Naive thymus-derived CD4-positive, alpha-beta T cell (primary cell): ENCODE measurements at regions of chr19 and their contacts with region 1.

Region 1: DNA sequence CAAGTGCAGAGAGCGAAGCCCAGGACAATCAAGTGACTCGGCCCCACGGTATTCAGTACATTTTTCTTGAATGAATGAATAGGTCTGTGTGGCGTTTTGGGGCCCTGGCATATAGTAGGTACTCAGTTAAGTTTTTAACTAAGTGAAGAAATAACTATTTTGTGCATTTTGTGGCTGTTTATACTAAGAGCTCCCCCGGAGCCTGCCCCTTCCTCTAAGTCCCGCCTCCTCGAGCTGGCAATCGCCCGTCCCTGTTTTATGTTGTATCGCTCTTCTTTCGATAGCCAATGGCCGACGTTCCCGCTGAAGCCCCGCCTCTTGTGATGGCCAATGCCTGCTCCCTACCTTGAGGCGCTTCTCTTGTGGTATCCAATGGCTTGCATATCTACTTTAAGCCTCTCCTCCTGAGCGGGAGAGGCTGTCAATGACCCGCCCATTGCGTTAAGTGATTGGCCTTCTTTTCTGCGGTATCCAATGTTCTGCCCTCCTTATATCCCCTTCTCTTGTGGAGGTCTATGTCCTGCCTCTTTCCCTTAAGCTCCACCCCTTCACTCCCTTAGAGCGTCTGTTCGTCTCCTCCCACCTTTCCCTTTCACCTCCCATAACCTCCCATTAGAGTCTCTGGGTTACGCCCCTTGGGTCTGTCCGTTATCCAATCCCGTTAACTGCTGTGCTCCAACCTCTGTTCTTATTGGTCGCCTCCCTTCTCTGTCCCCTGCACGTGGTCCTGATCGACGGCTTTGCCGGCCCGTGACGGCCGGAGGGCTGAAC is 509 bp upstream of the HDGFL2 start:
- DNase-seq: peak; percentile 78 to 100 (median 98)
- ATAC-seq: peak; percentile 90
- H3K4me3 ChIP-seq: peak overlapping the region; percentile 71
- H3K4me3 Mint-ChIP-seq: no peak overlapping the region
- H3K27ac ChIP-seq: peak overlapping the region; percentile 77
- H3K27ac Mint-ChIP-seq: no peak overlapping the region
- H3K4me1 ChIP-seq: peaks cover 7 to 12% of the 10 kb centered on the region in 2 donors
- H3K4me1 Mint-ChIP-seq: peaks cover 11 to 25% (median 24%) of the 10 kb centered on the region in 7 donors
- H3K27me3 ChIP-seq: no peaks in the 10 kb centered on the region
- H3K27me3 Mint-ChIP-seq: no peaks in the 10 kb centered on the region

Region 2: GRCh38 chr19:4065430-4066175 is 406.0 kb before region 1 on chr19:
- CTCF ChIA-PET with region 1: no interaction called
- POLR2A ChIA-PET with region 1: no interaction called
- intact Hi-C with region 1: loop called in 1 of 2 experiments (anchors 1 kb)
- DNase-seq: peak; percentile 97 to 99 (median 98)
- ATAC-seq: peak; percentile 89
- H3K4me3 ChIP-seq: no peak overlapping the region
- H3K4me3 Mint-ChIP-seq: peak overlapping the region; percentile 29 to 90 (median 67)
- H3K27ac ChIP-seq: peak overlapping the region; percentile 95
- H3K27ac Mint-ChIP-seq: peak overlapping the region in 6 of 9 donors; percentile 12 to 86 (median 66)
- H3K4me1 ChIP-seq: peaks cover 41 to 56% of the 10 kb centered on the region in 2 donors
- H3K4me1 Mint-ChIP-seq: peaks cover under 1 to 42% (median 26%) of the 10 kb centered on the region in 7 donors
- H3K27me3 ChIP-seq: no peaks in the 10 kb centered on the region
- H3K27me3 Mint-ChIP-seq: no peaks in the 10 kb centered on the region

Region 3: GRCh38 chr19:4328243-4328990 is 143.2 kb before region 1 on chr19:
- CTCF ChIA-PET with region 1: no interaction called
- POLR2A ChIA-PET with region 1: no interaction called
- intact Hi-C with region 1: loop called in 1 of 2 experiments (anchors 5 kb)
- DNase-seq: peak; percentile 87 to 96 (median 93)
- ATAC-seq: peak; percentile 93
- H3K4me3 ChIP-seq: peak overlapping the region; percentile 65
- H3K4me3 Mint-ChIP-seq: peak overlapping the region; percentile 83 to 90 (median 87)
- H3K27ac ChIP-seq: peak overlapping the region; percentile 52
- H3K27ac Mint-ChIP-seq: peak overlapping the region; percentile 72 to 98 (median 91)
- H3K4me1 ChIP-seq: peaks cover 11 to 14% of the 10 kb centered on the region in 2 donors
- H3K4me1 Mint-ChIP-seq: peaks cover 8 to 28% (median 24%) of the 10 kb centered on the region in 7 donors
- H3K27me3 ChIP-seq: no peaks in the 10 kb centered on the region
- H3K27me3 Mint-ChIP-seq: peaks cover 0 to 4% (median 0%) of the 10 kb centered on the region in 5 donors

Region 4: DNA sequence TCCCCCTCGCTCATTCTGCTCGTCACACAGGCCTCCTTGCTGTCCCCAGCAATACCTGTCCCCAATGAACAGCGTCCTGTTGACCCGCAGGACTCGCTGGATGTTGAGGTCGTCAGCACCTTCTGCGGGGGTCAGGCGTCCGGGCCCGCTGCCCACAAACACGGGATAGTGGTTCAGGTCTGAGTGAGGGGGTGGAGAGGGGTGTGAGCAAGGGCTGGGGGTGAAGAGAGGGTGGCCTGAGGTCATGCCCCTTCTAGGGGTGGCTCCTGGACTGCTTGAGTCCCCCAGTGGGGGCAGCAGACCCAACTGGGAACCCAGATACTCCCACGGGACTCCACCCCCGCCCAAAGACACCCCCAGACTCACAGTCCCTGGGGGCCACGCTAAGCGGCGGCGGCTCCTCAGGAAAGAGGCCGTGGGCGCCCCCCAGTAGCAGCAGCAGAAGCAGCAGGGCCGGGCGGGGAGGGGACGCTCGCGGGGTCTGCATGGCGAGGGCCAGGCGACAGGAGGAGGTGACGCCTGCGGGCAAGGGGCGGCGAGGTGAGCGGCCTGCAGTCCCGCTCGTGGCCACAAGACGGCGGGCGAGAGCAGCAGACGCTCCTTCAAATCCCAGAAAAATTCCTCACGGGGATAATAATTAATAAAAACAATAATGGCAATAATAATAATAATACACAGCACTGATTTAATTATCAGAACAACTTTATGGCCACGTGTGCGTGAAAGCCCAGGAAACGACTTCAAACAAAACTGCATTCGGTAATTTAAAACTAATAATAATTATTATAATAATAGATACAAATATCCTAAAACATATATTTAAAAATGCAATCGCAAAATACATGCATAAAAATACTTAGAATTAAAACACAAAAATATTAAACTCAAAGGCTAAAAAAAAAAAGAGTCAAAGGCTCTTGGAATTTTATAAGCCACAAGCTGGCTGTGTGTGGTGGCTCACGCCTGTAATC is 86.7 kb after region 1 on chr19:
- CTCF ChIA-PET with region 1: no interaction called
- POLR2A ChIA-PET with region 1: no interaction called
- intact Hi-C with region 1: no loop called
- DNase-seq: peak in 2 of 9 donors; percentile 24 to 48
- ATAC-seq: no peak
- H3K4me3 ChIP-seq: no peak overlapping the region
- H3K4me3 Mint-ChIP-seq: no peak overlapping the region
- H3K27ac ChIP-seq: no peak overlapping the region
- H3K27ac Mint-ChIP-seq: no peak overlapping the region
- H3K4me1 ChIP-seq: no peaks in the 10 kb centered on the region
- H3K4me1 Mint-ChIP-seq: peaks cover 0 to 13% (median 0%) of the 10 kb centered on the region in 7 donors
- H3K27me3 ChIP-seq: no peaks in the 10 kb centered on the region
- H3K27me3 Mint-ChIP-seq: peaks cover 0 to 14% (median 0%) of the 10 kb centered on the region in 5 donors

Region 5: GRCh38 chr19:4638828-4639530 is 167.4 kb after region 1 on chr19 and contains the start of gene TNFAIP8L1:
- CTCF ChIA-PET with region 1: no interaction called
- POLR2A ChIA-PET with region 1: no interaction called
- intact Hi-C with region 1: loop called (anchors 1 to 5 kb)
- DNase-seq: peak; percentile 97 to 100 (median 99)
- ATAC-seq: peak; percentile 97
- H3K4me3 ChIP-seq: peak within 1 kb of the TSS; percentile 81
- H3K4me3 Mint-ChIP-seq: peak within 1 kb of the TSS; percentile 90 to 99 (median 96)
- H3K27ac ChIP-seq: peak within 1 kb of the TSS; percentile 92
- H3K27ac Mint-ChIP-seq: peak within 1 kb of the TSS; percentile 92 to 99 (median 97)
- H3K4me1 ChIP-seq: peaks cover 27 to 32% of the 10 kb centered on the region in 2 donors
- H3K4me1 Mint-ChIP-seq: peaks cover 15 to 43% (median 32%) of the 10 kb centered on the region in 7 donors
- H3K27me3 ChIP-seq: no peaks in the 10 kb centered on the region
- H3K27me3 Mint-ChIP-seq: no peaks in the 10 kb centered on the region
- total RNA-seq, gene TNFAIP8L1: 11.2 to 22.4 (median 20.6) TPM

Region 6: GRCh38 chr19:4690351-4690750 is 218.8 kb after region 1 on chr19:
- CTCF ChIA-PET with region 1: no interaction called
- POLR2A ChIA-PET with region 1: no interaction called
- intact Hi-C with region 1: no loop called
- DNase-seq: no peak
- ATAC-seq: no peak
- H3K4me3 ChIP-seq: no peak overlapping the region
- H3K4me3 Mint-ChIP-seq: no peak overlapping the region
- H3K27ac ChIP-seq: no peak overlapping the region
- H3K27ac Mint-ChIP-seq: peak overlapping the region in 1 of 9 donors; percentile 57
- H3K4me1 ChIP-seq: no peaks in the 10 kb centered on the region
- H3K4me1 Mint-ChIP-seq: peaks cover 0 to 2% (median 0%) of the 10 kb centered on the region in 7 donors
- H3K27me3 ChIP-seq: no peaks in the 10 kb centered on the region
- H3K27me3 Mint-ChIP-seq: no peaks in the 10 kb centered on the region

Region 7: GRCh38 chr19:5622463-5623396 is 1151.1 kb after region 1 on chr19 and contains the starts of genes SAFB and SAFB2:
- CTCF ChIA-PET with region 1: no interaction called
- POLR2A ChIA-PET with region 1: no interaction called
- intact Hi-C with region 1: loop called in 1 of 2 experiments (anchors 1 kb)
- DNase-seq: peak; percentile 96 to 100 (median 100)
- ATAC-seq: peak; percentile 91
- H3K4me3 ChIP-seq: peak within 1 kb of the TSS; percentile 91
- H3K4me3 Mint-ChIP-seq: peak within 1 kb of the TSS; percentile 97 to 100 (median 100)
- H3K27ac ChIP-seq: peak within 1 kb of the TSS; percentile 97
- H3K27ac Mint-ChIP-seq: peak within 1 kb of the TSS; percentile 99 to 100 (median 100)
- H3K4me1 ChIP-seq: peaks cover 54 to 66% of the 10 kb centered on the region in 2 donors
- H3K4me1 Mint-ChIP-seq: peaks cover 52 to 79% (median 70%) of the 10 kb centered on the region in 7 donors
- H3K27me3 ChIP-seq: no peaks in the 10 kb centered on the region
- H3K27me3 Mint-ChIP-seq: peaks cover 0 to 5% (median 0%) of the 10 kb centered on the region in 5 donors
- total RNA-seq, gene SAFB: 141 to 203 (median 174) TPM
- total RNA-seq, gene SAFB2: 112 to 250 (median 243) TPM